A673 (cell line): ENCODE measurements at regions of chr12 and their contacts with region 1.

Region 1: GRCh38 chr12:990661-991349 is at the start of gene ERC1:
- DNase-seq: peak; percentile 92
- H3K4me3 ChIP-seq: peak within 1 kb of the TSS; percentile 80
- H3K27ac ChIP-seq: peak within 1 kb of the TSS; percentile 99
- H3K4me1 ChIP-seq: peaks cover 27% of the 10 kb centered on the region
- H3K27me3 ChIP-seq: no peaks in the 10 kb centered on the region
- CTCF ChIP-seq: no peak
- total RNA-seq, gene ERC1: 56.5 and 60.7 TPM in 2 replicates

Region 2: DNA sequence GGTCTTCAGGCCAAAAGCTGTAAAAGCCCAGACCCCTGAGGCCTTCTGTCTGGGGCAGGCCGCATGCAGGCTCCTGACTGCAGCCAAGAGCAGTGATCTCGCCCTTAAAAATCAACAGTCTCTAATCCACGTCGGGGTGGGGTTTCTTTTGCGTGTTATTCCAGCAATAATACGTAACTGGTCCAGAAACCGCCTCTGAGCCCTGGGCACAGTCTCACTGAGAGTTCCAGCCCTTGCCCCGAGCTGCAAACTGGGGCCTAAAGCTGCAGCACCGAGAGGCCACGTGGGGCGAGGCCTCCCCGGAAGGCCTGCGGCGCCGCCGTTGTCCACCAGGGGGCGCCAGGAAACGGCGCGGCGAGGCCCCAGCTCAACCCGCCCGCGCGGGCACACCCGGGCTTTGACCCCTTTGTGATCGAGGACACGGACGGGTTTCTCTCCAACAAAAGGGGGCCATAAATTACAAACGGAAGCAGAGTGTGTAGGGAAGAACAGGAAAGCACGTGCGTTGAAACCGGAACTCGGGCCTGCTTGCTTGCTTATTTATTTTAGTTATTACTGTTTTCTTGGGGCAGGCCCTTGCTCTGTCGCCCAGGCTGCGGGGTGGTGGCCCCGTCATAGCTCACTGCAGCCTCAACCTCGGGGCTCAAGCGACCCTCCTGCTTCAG is 414.7 kb before region 1 on chr12:
- CTCF ChIA-PET with region 1: no interaction called
- POLR2A ChIA-PET with region 1: no interaction called
- intact Hi-C with region 1: no loop called
- DNase-seq: peak; percentile 89
- H3K4me3 ChIP-seq: no peak overlapping the region
- H3K27ac ChIP-seq: no peak overlapping the region
- H3K4me1 ChIP-seq: peaks cover 17% of the 10 kb centered on the region
- H3K27me3 ChIP-seq: no peaks in the 10 kb centered on the region
- CTCF ChIP-seq: peak; percentile 99

Region 3: GRCh38 chr12:958588-959123 is 32.1 kb before region 1 on chr12:
- CTCF ChIA-PET with region 1: no interaction called
- POLR2A ChIA-PET with region 1: interaction called, 3 read pairs
- intact Hi-C with region 1: loop called (anchors 5 kb)
- DNase-seq: peak; percentile 95
- H3K4me3 ChIP-seq: no peak overlapping the region
- H3K27ac ChIP-seq: peak overlapping the region; percentile 37
- H3K4me1 ChIP-seq: peaks cover 36% of the 10 kb centered on the region
- H3K27me3 ChIP-seq: no peaks in the 10 kb centered on the region
- CTCF ChIP-seq: no peak

Region 4: GRCh38 chr12:1093166-1093751 is 102.5 kb after region 1 on chr12:
- CTCF ChIA-PET with region 1: interaction called, 4 read pairs
- POLR2A ChIA-PET with region 1: no interaction called
- intact Hi-C with region 1: loop called (anchors 5 kb)
- DNase-seq: peak; percentile 79
- H3K4me3 ChIP-seq: no peak overlapping the region
- H3K27ac ChIP-seq: no peak overlapping the region
- H3K4me1 ChIP-seq: no peaks in the 10 kb centered on the region
- H3K27me3 ChIP-seq: no peaks in the 10 kb centered on the region
- CTCF ChIP-seq: peak; percentile 84